GM10248 (cell line): ENCODE measurements at regions of chr10 and their contacts with region 1.

Region 1: DNA sequence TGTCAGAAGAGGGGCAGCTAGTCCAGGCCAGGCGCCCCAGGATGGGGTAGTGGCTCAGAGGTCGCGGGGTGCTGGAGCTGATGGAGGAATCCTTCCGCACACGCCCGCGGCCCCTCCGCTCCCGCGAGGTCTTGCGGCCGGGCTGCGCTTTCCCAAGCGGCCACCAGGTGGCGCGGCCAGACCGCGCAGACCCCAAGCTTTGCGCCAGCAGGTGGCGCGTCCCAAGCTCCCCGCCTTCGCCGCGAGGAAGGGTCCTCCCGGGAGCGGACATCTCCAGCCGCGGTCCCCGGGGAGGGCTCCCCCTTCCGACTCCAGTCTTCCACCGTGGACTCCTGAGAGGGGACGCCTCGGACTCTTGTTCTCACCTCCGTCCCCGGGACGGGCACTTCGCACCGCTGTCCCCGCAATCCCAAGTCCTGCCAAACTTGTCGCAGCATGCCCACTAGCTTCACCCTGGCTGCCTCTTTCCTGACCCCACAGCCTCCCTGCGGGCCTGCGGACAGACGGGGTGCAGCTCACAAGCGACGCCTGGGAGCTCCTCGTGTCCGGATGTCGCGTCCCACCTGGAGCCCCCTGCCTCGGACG is 19.4 kb downstream of the KCNK18 start:
- DNase-seq: peak; percentile 90
- CTCF ChIP-seq: peak; percentile 100

Region 2: GRCh38 chr10:116925056-116925455 is 291.6 kb before region 1 on chr10:
- CTCF ChIA-PET with region 1: no interaction called
- POLR2A ChIA-PET with region 1: no interaction called
- DNase-seq: no peak
- CTCF ChIP-seq: no peak

Region 3: DNA sequence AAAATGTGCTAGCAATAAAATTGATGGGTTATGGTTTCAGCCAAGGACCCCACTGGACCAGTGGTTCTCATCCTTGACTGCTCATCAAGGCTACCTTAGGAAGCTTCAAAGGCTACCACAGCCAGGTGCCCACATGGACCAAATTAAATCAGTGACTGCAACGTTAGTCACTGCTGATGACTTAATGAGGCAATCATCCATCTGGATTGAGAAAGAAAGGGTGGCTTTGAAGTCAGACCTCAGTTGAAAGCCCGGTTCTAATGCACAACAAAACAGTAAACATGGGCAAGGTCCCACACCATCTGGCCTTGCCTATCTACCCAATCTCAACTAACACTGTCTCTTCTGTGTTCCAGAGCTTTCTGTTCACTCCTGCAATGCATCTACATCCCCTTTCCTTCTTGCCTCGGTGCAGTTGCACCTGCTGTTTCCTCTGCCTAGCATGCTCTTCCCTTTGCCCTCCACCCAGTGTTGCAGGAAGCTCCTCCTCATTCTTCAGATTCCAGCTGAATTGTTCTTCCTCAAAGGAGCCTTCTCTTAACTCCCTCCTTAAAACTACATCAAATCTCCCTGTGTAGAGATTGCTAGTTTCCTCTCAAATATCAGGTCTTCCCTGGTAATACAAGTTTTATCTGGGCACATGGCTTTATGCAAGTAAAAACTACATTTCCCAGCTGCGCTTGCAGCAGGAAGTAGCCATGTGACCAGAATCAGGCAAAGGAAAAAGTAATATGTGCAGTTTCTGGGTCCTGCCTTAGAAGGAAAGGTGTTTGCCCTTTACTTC is 29.7 kb before region 1 on chr10:
- CTCF ChIA-PET with region 1: interaction called, 14 read pairs
- POLR2A ChIA-PET with region 1: no interaction called
- DNase-seq: no peak
- CTCF ChIP-seq: no peak

Region 4: GRCh38 chr10:117204316-117204715 is 12.4 kb before region 1 on chr10:
- CTCF ChIA-PET with region 1: interaction called, 33 read pairs
- POLR2A ChIA-PET with region 1: no interaction called
- DNase-seq: no peak
- CTCF ChIP-seq: no peak

Region 5: DNA sequence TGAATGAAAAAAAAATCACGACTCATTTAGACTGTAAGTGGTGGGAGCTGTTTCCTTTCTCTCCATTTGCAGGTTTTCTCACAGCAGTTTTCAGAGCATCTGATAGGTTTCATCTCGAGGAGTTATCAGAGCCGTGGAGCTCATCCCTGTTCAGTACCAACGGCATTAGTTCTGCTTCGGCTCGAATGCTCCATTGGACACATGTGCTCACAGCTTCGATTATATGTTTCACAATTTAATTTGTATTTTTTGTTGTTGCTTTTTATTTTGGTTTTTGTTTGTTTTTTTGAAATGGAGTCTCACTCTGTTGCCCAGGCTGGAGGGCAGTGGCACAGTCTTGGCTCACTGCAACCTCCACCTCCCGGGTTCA is 25.7 kb after region 1 on chr10:
- CTCF ChIA-PET with region 1: interaction called, 18 read pairs
- POLR2A ChIA-PET with region 1: no interaction called
- DNase-seq: no peak
- CTCF ChIP-seq: no peak

Region 6: GRCh38 chr10:117442944-117443685 is 226.4 kb after region 1 on chr10:
- CTCF ChIA-PET with region 1: interaction called, 19 read pairs
- POLR2A ChIA-PET with region 1: no interaction called
- DNase-seq: peak; percentile 82
- CTCF ChIP-seq: peak; percentile 79

Region 7: GRCh38 chr10:117496616-117497028 is 279.9 kb after region 1 on chr10:
- CTCF ChIA-PET with region 1: interaction called, 16 read pairs
- POLR2A ChIA-PET with region 1: no interaction called
- DNase-seq: peak; percentile 76
- CTCF ChIP-seq: peak; percentile 98

Region 8: DNA sequence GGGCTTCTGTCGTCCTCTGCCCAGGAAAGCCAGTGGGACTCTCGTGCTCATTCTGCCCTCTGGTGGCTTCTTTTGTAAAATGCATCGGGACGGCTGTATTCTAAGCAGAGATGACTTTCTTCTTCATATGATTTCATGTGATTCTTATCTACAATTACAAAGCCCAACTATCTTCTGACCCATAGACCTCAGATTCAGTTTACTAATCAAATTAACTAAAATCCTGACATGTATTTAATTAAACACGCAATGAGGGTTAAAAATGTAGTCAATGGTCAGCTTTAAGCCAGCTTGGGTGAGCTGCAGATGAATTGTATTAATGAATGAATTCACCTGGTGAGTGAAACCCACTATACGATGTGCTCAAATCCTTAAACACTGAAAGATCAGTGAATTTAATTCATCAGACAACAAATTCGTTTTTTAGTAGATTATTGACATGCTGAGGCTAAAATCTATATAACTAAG is 1243.1 kb after region 1 on chr10:
- CTCF ChIA-PET with region 1: interaction called, 10 read pairs
- POLR2A ChIA-PET with region 1: no interaction called
- DNase-seq: peak; percentile 53
- CTCF ChIP-seq: peak; percentile 70